ENCODE measurements at regions of chr15 and their contacts with region 1.

Region 1: DNA sequence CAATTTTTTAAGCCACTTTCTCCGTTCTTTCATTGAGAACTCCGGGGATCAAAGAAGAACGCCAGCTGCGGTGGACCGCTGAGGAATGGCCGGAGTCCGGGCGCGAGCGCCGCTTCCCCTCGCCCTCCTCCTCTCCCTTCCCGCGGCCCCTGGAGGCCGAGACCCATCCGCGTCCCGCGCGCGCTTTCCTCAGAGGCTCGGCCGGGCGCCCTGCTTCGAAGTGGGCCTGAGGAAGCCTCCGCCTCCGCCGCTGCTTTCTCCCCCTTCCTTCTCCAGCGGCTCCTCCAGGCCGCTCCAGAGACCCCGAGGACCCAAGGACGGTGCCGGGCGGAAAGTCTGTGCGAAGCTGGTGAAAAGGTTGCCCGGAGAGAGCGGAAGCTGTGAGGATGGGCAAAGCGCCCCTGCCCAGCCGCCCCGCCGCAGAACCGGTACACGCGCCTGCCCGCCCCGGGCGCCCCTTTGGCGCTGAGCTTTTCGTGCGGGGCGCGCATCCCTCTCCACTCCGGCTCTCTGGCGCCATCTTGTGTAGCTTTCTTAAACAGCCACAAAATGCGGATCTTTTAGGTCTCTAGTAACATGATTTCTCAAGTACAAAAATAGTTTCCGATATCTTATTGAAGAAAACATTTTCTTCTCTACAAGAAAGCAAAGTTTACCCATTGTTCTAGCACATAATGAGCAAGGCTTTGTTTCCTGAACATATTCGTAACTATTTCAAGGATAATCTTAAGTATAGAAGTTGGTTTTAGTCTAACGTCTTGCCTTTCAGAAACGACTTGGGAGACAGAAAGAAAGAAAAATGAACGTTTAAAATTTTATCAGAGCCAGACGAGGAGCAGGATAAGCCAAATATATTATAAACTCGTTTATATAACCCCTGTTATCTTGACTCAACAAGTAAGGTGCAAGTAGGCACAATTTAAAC is 59.2 kb upstream of the FAM174B start:
- DNase-seq: no peak
- H3K4me3 ChIP-seq: peak overlapping the region; percentile 35 to 72 (median 56)
- H3K27ac ChIP-seq: peak overlapping the region; percentile 61 to 89 (median 85)
- H3K4me1 ChIP-seq: peaks cover 0 to 21% (median 2%) of the 10 kb centered on the region in 3 donors
- H3K27me3 ChIP-seq: peaks cover 0 to 9% (median 0%) of the 10 kb centered on the region in 4 donors
- CTCF ChIP-seq: peak; percentile 67 to 92 (median 83)
- POLR2A ChIP-seq: no peak

Region 2: GRCh38 chr15:92521624-92522008 is 193.1 kb before region 1 on chr15:
- intact Hi-C with region 1: loop called (anchors 5 kb)
- DNase-seq: no peak
- H3K4me3 ChIP-seq: no peak overlapping the region
- H3K27ac ChIP-seq: no peak overlapping the region
- H3K4me1 ChIP-seq: peaks cover 0 to 10% (median 0%) of the 10 kb centered on the region in 3 donors
- H3K27me3 ChIP-seq: no peaks in the 10 kb centered on the region
- CTCF ChIP-seq: peak; percentile 47 to 88 (median 79)
- POLR2A ChIP-seq: no peak

Region 3: DNA sequence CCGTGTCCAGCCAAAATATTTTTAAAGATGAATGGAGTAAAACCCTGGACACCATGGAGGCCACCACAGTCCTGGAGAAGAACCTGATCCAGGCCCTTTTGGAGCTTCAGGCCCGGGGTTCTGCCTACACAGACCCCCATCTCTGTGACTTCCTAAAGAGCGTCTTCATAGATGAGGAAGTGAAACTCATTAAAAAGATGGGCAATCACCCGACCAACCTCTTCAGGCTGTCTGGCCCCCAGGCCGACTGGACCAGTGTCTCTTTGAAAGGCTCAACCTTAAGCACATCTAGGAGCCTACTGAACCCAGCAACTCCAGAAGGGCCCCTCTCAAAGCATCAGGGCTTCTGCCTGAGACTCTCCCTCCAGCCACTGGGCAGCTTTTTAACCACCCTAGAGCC is 48.7 kb after region 1 on chr15:
- intact Hi-C with region 1: no loop called
- DNase-seq: no peak
- H3K4me3 ChIP-seq: no peak overlapping the region
- H3K27ac ChIP-seq: no peak overlapping the region
- H3K4me1 ChIP-seq: no peaks in the 10 kb centered on the region
- H3K27me3 ChIP-seq: no peaks in the 10 kb centered on the region
- CTCF ChIP-seq: no peak
- POLR2A ChIP-seq: no peak

Region 4: DNA sequence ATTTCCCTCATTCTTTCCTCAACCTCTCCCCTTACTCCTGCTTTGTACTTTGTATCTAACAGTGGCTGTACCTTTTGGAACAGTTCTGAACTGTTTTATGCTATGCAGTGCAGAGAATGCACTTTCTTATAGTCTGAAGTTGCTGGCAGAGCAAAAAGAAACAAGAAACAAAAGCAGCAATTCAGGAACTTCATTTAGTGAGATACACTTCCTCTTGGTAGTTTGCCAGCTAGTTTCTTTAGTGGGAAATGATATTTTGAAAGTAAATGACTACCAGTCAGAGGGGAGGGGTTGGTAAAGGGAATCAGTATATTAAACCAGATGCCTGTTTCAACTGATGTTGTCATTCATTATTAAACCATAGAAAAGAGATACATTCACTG is 130.4 kb after region 1 on chr15:
- intact Hi-C with region 1: no loop called
- DNase-seq: no peak
- H3K4me3 ChIP-seq: no peak overlapping the region
- H3K27ac ChIP-seq: peak overlapping the region; percentile 59 to 80 (median 68)
- H3K4me1 ChIP-seq: peaks cover 0 to 26% (median 14%) of the 10 kb centered on the region in 3 donors
- H3K27me3 ChIP-seq: no peaks in the 10 kb centered on the region
- CTCF ChIP-seq: no peak
- POLR2A ChIP-seq: peak in 1 of 4 donors; percentile 6